CD4-positive, alpha-beta T cell (primary cell): ENCODE measurements at regions of chr1 and their contacts with region 1.

Region 1: GRCh38 chr1:229661022-229661877 is 35.2 kb downstream of the URB2 start:
- DNase-seq: peak; percentile 55 to 81 (median 66)
- ATAC-seq: peak; percentile 89
- H3K4me3 ChIP-seq: no peak overlapping the region
- H3K4me3 Mint-ChIP-seq: no peak overlapping the region
- H3K27ac ChIP-seq: no peak overlapping the region
- H3K27ac Mint-ChIP-seq: peak overlapping the region; percentile 51
- H3K4me1 ChIP-seq: peaks cover 24% of the 10 kb centered on the region
- H3K4me1 Mint-ChIP-seq: peaks cover 6% of the 10 kb centered on the region
- H3K27me3 ChIP-seq: no peaks in the 10 kb centered on the region
- H3K27me3 Mint-ChIP-seq: no peaks in the 10 kb centered on the region
- CTCF ChIP-seq: peak; percentile 86

Region 2: GRCh38 chr1:229694053-229694693 is 32.9 kb after region 1 on chr1:
- CTCF ChIA-PET with region 1: no interaction called
- POLR2A ChIA-PET with region 1: no interaction called
- intact Hi-C with region 1: no loop called
- DNase-seq: no peak
- ATAC-seq: no peak
- H3K4me3 ChIP-seq: no peak overlapping the region
- H3K4me3 Mint-ChIP-seq: no peak overlapping the region
- H3K27ac ChIP-seq: no peak overlapping the region
- H3K27ac Mint-ChIP-seq: no peak overlapping the region
- H3K4me1 ChIP-seq: peaks cover 9% of the 10 kb centered on the region
- H3K4me1 Mint-ChIP-seq: peaks cover 26% of the 10 kb centered on the region
- H3K27me3 ChIP-seq: no peaks in the 10 kb centered on the region
- H3K27me3 Mint-ChIP-seq: peaks cover 6% of the 10 kb centered on the region
- CTCF ChIP-seq: no peak

Region 3: GRCh38 chr1:230104395-230105244 is 443.4 kb after region 1 on chr1:
- CTCF ChIA-PET with region 1: no interaction called
- POLR2A ChIA-PET with region 1: no interaction called
- intact Hi-C with region 1: loop called in 1 of 2 experiments (anchors 5 kb)
- DNase-seq: peak; percentile 9 to 75 (median 42)
- ATAC-seq: peak; percentile 60
- H3K4me3 ChIP-seq: no peak overlapping the region
- H3K4me3 Mint-ChIP-seq: peak overlapping the region; percentile 23
- H3K27ac ChIP-seq: no peak overlapping the region
- H3K27ac Mint-ChIP-seq: peak overlapping the region; percentile 42
- H3K4me1 ChIP-seq: peaks cover 42% of the 10 kb centered on the region
- H3K4me1 Mint-ChIP-seq: peaks cover 84% of the 10 kb centered on the region
- H3K27me3 ChIP-seq: no peaks in the 10 kb centered on the region
- H3K27me3 Mint-ChIP-seq: no peaks in the 10 kb centered on the region
- CTCF ChIP-seq: no peak

Region 4: GRCh38 chr1:230109895-230110667 is 448.8 kb after region 1 on chr1:
- CTCF ChIA-PET with region 1: no interaction called
- POLR2A ChIA-PET with region 1: no interaction called
- intact Hi-C with region 1: loop called (anchors 1 to 5 kb)
- DNase-seq: peak; percentile 16 to 64 (median 40)
- ATAC-seq: peak; percentile 92
- H3K4me3 ChIP-seq: no peak overlapping the region
- H3K4me3 Mint-ChIP-seq: no peak overlapping the region
- H3K27ac ChIP-seq: no peak overlapping the region
- H3K27ac Mint-ChIP-seq: peak overlapping the region; percentile 10
- H3K4me1 ChIP-seq: peaks cover 27% of the 10 kb centered on the region
- H3K4me1 Mint-ChIP-seq: peaks cover 70% of the 10 kb centered on the region
- H3K27me3 ChIP-seq: no peaks in the 10 kb centered on the region
- H3K27me3 Mint-ChIP-seq: no peaks in the 10 kb centered on the region
- CTCF ChIP-seq: no peak

Region 5: DNA sequence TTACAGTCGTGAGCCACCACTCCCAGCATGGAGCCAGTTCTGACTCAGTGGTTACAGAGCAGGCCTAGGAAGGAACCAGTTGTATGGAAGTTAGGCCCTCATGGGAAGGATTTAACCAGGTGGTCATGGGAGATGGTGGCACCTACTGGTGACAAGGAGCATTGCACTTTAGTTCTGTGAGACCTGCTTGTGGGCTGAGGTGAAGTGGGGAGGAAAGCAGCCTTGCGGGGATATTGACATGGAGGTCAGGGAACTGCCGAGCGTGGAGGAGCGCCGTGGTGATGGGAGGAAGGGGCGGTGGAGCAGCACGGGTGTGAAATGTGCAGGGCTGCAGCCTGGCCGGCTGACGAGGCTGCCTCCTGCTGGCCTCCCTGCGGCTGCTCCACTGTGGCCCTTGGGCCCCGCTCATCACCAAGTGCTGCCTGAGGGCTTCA is 506.2 kb after region 1 on chr1:
- CTCF ChIA-PET with region 1: interaction called, 10 read pairs
- POLR2A ChIA-PET with region 1: no interaction called
- intact Hi-C with region 1: loop called (anchors 1 kb)
- DNase-seq: peak in 11 of 14 experiments; percentile 9 to 75 (median 14)
- ATAC-seq: peak; percentile 60
- H3K4me3 ChIP-seq: no peak overlapping the region
- H3K4me3 Mint-ChIP-seq: no peak overlapping the region
- H3K27ac ChIP-seq: no peak overlapping the region
- H3K27ac Mint-ChIP-seq: no peak overlapping the region
- H3K4me1 ChIP-seq: peaks cover 9% of the 10 kb centered on the region
- H3K4me1 Mint-ChIP-seq: peaks cover 30% of the 10 kb centered on the region
- H3K27me3 ChIP-seq: no peaks in the 10 kb centered on the region
- H3K27me3 Mint-ChIP-seq: no peaks in the 10 kb centered on the region
- CTCF ChIP-seq: peak; percentile 77

Region 6: GRCh38 chr1:230310381-230311163 is 649.3 kb after region 1 on chr1:
- CTCF ChIA-PET with region 1: interaction called, 7 read pairs
- POLR2A ChIA-PET with region 1: no interaction called
- intact Hi-C with region 1: loop called (anchors 1 kb)
- DNase-seq: peak; percentile 23 to 83 (median 57)
- ATAC-seq: peak; percentile 59
- H3K4me3 ChIP-seq: no peak overlapping the region
- H3K4me3 Mint-ChIP-seq: no peak overlapping the region
- H3K27ac ChIP-seq: no peak overlapping the region
- H3K27ac Mint-ChIP-seq: no peak overlapping the region
- H3K4me1 ChIP-seq: peaks cover 5% of the 10 kb centered on the region
- H3K4me1 Mint-ChIP-seq: peaks cover 4% of the 10 kb centered on the region
- H3K27me3 ChIP-seq: no peaks in the 10 kb centered on the region
- H3K27me3 Mint-ChIP-seq: no peaks in the 10 kb centered on the region
- CTCF ChIP-seq: peak; percentile 98